RWPE1 (cell line): ENCODE measurements at regions of chr20 and their contacts with region 1.

Region 1: GRCh38 chr20:51800060-51800794 is 2.1 kb downstream of the SALL4 start:
- DNase-seq: peak; percentile 92
- H3K27ac ChIP-seq: no peak overlapping the region
- CTCF ChIP-seq: peak; percentile 99

Region 2: DNA sequence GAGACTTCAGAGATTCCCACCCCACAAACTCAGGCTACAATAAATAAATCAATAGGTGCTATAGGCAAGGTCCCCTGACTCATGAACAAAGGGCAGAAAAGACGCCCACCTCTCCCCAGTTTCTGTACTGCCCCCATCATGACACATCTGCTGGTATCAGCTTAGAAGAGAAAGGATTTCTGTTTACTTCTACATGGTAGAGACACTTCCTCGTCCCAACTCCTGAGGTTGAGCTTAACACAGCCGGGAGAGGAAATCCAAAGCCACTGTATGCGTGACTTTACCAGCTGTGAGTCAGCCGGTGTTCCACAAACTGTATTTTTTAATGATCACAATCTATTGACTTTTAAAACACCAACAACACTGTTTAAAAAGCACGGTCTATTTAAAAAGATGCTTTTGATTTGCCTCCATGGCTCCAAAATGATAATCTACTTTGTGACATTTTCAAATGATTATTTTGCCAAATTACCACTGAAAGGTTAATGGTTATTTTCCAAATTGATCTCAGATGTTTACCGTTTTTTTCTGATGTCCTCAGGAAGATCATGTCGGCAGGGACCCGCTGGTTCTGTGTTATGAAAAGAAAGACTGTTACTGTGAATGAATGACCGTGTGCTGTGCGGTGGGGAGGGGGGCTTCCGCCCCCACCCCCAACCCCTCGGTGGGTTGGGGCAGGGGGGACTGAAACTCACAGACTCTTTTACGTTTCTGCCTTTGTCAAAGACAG is 104.5 kb before region 1 on chr20:
- CTCF ChIA-PET with region 1: interaction called, 11 read pairs
- POLR2A ChIA-PET with region 1: no interaction called
- DNase-seq: peak; percentile 28
- H3K27ac ChIP-seq: peak overlapping the region; percentile 72
- CTCF ChIP-seq: no peak

Region 3: DNA sequence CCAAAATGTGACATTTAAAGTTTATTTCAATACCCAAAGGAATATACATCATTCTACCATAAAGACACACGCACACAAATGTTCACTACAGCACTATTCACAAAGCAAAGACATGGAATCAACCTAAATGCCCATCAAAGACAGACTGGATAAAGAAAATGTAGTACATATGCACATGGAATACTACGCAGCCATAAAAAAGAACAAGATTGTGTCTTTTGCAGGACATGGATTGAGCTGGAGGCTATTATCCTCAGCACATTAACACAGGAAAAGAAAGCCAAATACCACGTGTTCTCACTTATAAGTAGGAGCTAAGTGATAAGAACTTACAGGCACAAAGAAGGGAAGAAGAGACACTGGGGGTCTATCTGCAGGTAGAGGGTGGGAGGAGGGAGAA is 54.4 kb before region 1 on chr20:
- CTCF ChIA-PET with region 1: no interaction called
- POLR2A ChIA-PET with region 1: no interaction called
- DNase-seq: no peak
- H3K27ac ChIP-seq: no peak overlapping the region
- CTCF ChIP-seq: no peak

Region 4: DNA sequence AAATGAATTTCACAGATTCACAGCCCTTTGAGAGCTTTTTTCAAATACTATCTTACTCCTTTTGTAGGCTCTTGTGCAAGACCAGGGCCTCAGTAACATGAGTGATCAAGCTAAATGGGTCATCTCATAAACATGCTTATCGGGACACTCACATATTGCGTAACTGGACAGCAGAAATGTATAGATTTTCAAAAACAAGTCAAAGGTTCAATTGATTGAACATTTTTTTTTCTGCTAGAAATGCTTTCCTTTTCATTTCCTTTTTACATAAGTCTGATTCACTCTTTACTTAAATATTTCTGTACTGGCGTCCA is 10.8 kb after region 1 on chr20:
- CTCF ChIA-PET with region 1: interaction called, 11 read pairs
- POLR2A ChIA-PET with region 1: no interaction called
- DNase-seq: peak; percentile 60
- H3K27ac ChIP-seq: no peak overlapping the region
- CTCF ChIP-seq: no peak

Region 5: DNA sequence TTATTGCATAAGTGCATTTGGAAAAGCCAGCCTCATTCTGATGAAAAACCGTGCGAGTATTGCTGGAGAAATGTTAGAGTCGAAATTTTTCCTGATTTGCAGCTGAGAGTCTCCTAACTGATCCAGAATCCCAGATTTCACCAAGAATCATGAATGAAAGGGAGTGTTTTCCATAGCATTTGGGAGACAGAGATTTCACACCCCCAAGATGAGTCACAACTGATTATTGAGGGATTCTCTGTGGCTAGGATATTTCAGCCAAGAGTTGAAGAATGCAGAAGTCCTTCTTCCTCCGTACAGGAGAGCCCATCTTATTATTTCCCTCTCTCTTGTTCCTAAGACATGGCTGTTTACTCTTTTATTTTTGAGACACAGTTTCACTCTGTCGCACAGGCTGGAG is 84.3 kb after region 1 on chr20:
- CTCF ChIA-PET with region 1: no interaction called
- POLR2A ChIA-PET with region 1: no interaction called
- DNase-seq: no peak
- H3K27ac ChIP-seq: no peak overlapping the region
- CTCF ChIP-seq: no peak

Region 6: DNA sequence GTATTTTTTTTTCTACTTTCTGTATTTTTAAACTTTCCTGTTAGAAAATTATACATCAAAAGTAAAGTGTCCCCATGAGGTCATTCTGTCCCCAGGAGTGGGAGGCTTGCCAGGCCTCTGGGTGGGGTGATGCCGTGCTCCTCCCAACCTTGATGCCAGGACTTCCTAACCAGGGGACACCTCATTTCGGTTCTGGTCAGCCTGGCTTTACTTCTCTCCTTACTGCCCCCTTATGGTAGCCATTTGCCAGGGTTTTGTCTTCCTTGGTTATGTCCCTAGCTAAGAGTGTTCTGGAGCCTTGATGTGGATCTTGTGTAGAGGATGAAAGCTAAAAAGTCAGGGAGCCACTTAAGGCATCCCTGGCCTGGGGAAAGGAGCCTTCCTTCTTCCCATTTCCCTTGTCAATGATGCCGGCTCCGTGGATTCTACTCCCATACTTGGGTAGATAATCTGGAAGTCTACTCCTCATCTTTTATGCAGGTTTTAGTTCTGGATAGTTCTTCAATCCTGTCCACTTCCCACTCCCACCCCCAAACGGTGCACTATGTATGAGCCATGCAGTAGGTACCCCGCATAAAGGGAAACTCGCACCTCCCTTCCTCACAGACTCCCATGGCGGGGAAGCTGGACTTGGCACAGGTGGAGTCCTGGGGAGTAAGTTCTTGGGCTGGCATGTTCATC is 166.2 kb after region 1 on chr20:
- CTCF ChIA-PET with region 1: interaction called, 14 read pairs
- POLR2A ChIA-PET with region 1: no interaction called
- DNase-seq: peak; percentile 57
- H3K27ac ChIP-seq: no peak overlapping the region
- CTCF ChIP-seq: peak; percentile 67

Region 7: DNA sequence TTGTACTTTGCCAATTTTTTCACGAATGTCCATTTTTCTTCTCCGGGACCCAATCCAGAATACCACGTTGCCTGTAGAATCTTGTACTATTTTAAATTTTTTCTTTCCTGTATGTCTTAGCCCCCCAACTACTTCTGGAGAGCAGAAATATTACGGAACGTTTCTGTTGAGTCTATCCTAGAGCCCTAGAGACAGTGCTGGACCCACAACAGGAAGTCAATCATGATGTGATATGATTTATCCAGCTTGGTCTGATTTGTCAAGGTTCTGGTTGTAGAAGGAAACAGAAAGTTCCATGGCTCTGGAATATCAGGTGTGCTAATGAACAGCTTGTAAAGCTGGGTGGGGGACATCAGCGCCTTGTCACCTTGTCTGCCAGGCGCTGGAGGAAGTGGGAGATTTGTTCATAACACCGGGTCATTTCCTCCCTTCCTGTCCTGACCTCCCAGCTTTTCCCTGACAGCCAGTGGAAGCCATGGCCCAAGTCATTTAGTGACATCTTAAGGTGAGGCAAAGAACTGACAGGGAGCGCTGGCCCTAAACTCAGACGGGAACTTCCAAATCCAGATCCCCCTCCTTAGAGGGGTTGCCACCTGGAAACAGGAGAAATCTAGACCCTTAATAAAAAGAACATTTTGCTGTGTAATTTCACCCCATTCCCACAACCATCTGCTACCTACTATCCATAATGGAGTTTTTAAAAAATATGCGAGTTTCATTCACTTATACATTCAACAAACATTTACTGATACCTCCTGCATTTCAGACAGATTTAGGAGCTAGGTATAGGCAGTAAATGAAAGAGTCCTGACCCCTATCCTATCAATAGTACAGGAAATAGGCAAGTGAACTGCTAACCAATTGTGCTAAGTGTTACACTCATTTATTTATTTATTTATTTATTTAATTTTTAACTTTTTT is 260.8 kb after region 1 on chr20:
- CTCF ChIA-PET with region 1: interaction called, 12 read pairs
- POLR2A ChIA-PET with region 1: no interaction called
- DNase-seq: peak; percentile 33
- H3K27ac ChIP-seq: no peak overlapping the region
- CTCF ChIP-seq: peak; percentile 57

Region 8: GRCh38 chr20:52083627-52084232 is 283.5 kb after region 1 on chr20:
- CTCF ChIA-PET with region 1: interaction called, 20 read pairs
- POLR2A ChIA-PET with region 1: no interaction called
- DNase-seq: peak; percentile 82
- H3K27ac ChIP-seq: no peak overlapping the region
- CTCF ChIP-seq: peak; percentile 86